HEK293T (cell line): ENCODE measurements at regions of chr15 and their contacts with region 1.

Region 1: GRCh38 chr15:71800835-71801745 is 9.3 kb upstream of the NR2E3 start:
- DNase-seq: peak; percentile 65

Region 2: GRCh38 chr15:71743861-71744382 is 57.2 kb before region 1 on chr15:
- CTCF ChIA-PET with region 1: interaction called, 16 read pairs
- POLR2A ChIA-PET with region 1: no interaction called
- DNase-seq: peak; percentile 56

Region 3: GRCh38 chr15:71752604-71753289 is 48.3 kb before region 1 on chr15:
- CTCF ChIA-PET with region 1: interaction called, 20 read pairs
- POLR2A ChIA-PET with region 1: no interaction called
- DNase-seq: peak; percentile 48

Region 4: DNA sequence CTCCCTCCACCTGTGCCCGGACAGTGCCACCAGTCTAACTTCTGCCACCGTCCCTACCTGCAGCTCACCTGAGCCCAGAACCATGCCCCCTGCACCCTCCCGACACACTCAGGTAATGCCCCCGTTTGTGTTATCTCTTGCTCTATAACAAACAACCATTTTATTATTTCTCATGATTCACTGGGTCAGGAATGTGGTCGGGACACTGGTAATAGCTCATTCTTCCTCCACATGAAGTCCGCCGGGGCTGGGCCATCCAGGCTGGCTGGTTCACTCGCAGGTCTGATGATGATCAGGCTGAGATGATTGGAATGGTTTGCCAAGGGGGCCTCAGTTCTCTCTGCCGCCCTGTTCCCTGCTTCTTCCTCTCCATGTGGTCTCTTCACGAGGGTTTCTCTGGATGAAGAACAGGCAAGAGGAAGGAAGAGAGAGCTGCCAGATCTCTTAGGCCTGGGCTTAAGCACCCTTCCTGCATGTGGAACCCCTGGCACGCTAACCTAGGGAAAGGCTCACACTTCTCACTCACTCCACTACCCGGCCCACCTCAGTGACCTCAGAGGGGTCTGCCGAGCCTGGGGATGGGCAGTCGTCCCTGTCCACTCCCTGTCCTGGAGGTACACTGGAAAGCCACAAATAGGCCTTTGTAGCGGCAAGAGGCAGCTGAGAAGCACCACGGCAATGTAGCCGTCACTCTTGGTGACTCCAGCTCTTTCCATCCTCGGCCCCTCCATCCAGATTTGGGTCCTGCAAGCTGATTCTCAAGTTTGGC is 10.8 kb before region 1 on chr15:
- CTCF ChIA-PET with region 1: interaction called, 10 read pairs
- POLR2A ChIA-PET with region 1: no interaction called
- DNase-seq: no peak